ENCODE measurements at regions of chr1 and their contacts with region 1.

Region 1: DNA sequence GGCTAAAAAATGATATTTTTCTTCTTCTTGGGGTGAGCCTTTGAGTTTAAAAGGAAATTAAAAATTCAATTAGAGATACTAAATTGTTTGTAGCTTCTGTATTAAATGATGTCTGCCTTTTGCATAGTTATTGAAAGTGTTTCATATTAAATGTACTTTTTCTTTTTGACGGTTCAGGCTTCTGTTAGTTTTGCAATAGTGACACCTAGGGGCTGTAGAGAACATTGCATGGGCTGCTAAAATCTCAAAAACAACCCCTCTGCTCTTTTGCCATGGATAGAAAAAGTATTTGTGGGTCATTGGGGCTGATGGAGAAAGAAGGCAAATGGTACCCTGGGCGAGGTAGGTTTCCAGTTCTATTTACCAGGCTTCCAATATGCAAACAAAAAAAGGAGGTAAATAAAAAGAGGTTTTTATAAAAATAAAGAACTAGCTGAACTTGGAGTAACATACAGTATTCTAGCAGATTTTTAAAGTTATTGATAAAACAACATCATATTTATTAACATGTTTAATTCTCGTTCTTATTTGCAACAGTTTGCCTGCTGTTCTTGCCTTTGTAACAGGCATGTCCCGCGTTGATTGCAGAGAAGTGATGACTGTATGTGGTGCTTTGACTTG is 115.4 kb upstream of the HOOK1 start:
- DNase-seq: no peak
- H3K4me3 ChIP-seq: no peak overlapping the region
- H3K27ac ChIP-seq: no peak overlapping the region
- H3K4me1 ChIP-seq: peaks cover 0 to 9% (median 2%) of the 10 kb centered on the region in 4 experiments; a peak in 5 of 7 replicates
- H3K27me3 ChIP-seq: no peaks in the 10 kb centered on the region
- CTCF ChIP-seq: peak in 2 of 3 experiments; percentile 60 to 80; a peak in 3 of 4 replicates
- EP300 ChIP-seq: no peak
- POLR2A ChIP-seq: no peak
- RAD21 ChIP-seq: peak; percentile 94

Region 2: GRCh38 chr1:58739856-58740466 is 959.4 kb before region 1 on chr1:
- CTCF ChIA-PET with region 1: interaction called, 14 read pairs
- POLR2A ChIA-PET with region 1: no interaction called
- DNase-seq: no peak
- H3K4me3 ChIP-seq: no peak overlapping the region
- H3K27ac ChIP-seq: no peak overlapping the region
- H3K4me1 ChIP-seq: no peaks in the 10 kb centered on the region
- H3K27me3 ChIP-seq: no peaks in the 10 kb centered on the region
- CTCF ChIP-seq: peak in 2 of 3 experiments; percentile 43 to 57; a peak in 2 of 4 replicates
- EP300 ChIP-seq: no peak
- POLR2A ChIP-seq: no peak
- RAD21 ChIP-seq: peak; percentile 88 to 89

Region 3: DNA sequence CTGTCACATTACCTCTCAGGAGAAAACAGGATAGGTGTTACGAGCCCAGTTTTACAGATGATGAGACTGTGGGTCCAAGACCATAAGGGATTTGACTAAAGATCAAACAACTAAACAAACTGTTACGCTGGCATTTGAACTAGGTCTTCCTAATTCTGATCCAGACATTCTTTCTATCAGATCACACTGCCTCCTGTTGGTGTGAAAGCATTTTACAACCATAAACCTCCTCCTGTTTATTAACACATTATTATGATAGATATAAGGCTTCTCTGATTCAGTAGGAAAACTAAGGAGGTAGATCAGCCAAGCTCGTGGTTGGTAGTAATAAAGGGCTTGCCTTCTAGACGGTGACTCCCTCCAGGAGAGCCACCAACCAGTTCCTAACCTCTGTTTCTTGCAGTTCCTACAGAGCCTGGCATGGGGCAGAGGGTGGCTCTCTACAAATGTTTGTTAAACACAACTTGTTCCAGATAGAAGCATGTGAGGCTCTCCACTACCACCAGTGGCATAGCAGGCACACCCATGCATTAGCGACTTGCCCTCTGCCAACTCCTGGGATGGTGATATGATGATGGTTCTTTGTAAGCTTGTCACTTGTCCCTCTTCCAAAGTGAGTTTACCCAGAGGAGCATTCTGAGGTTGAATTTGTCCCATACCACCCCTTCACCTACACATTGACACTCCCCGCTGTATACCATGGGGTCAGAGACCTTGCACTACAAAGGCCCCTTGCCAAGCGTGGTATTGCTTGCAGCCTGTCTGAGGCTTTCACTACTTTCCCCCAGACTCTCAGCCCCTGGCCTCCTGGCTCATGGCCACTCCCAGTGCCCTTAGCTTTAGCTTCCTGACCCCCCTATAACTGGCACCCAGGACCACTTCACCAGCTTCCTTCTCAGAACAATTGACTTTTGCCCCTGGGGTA is 19.0 kb after region 1 on chr1:
- CTCF ChIA-PET with region 1: interaction called, 21 read pairs
- POLR2A ChIA-PET with region 1: no interaction called
- DNase-seq: no peak
- H3K4me3 ChIP-seq: no peak overlapping the region
- H3K27ac ChIP-seq: no peak overlapping the region
- H3K4me1 ChIP-seq: peaks cover 0 to 6% (median 0%) of the 10 kb centered on the region in 4 experiments; a peak in 1 of 7 replicates
- H3K27me3 ChIP-seq: no peaks in the 10 kb centered on the region
- CTCF ChIP-seq: peak in 2 of 3 experiments; percentile 29 to 60; a peak in 2 of 4 replicates
- EP300 ChIP-seq: no peak
- POLR2A ChIP-seq: no peak
- RAD21 ChIP-seq: peak; percentile 61 to 66

Region 4: DNA sequence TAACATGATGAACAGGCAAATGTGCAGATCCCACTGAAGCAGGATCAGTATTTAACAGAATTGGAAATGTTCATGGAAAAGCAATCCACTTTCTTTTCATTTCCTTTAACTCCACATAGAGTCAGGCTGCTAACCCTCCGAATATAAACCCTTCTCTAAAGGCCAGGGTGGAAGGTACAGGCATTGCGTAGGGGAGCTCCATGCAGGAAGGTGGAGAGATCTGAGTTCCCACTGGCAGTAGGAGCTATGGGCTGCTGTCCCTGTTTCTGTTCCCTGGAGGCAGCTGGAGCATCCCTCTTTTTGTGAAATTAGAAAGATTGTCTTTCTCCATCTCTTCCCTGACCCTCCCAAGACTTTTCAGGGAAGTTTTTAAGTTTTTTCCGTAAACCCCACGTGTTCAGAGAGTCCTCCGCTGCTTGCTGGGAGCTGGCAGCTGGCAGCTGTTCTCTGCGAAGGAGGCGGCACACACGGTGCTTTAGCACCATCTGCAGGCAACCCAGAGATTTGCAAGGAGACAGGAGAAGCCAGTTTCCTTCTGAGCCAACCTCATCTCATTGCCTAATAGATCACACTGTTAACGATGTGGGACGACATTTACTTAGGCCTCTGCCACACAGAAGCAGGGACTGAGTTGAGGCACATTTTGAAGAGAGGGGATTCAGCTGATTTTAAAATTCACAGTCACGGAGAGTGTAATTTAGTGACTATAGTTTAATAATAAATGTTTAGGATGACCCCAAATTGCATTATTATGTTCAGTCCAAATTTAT is 60.0 kb after region 1 on chr1:
- CTCF ChIA-PET with region 1: interaction called, 11 read pairs
- POLR2A ChIA-PET with region 1: no interaction called
- DNase-seq: peak; percentile 54 to 84
- H3K4me3 ChIP-seq: no peak overlapping the region
- H3K27ac ChIP-seq: no peak overlapping the region
- H3K4me1 ChIP-seq: no peaks in the 10 kb centered on the region; a peak in 1 of 7 replicates
- H3K27me3 ChIP-seq: peaks cover 0 to 1% (median 0%) of the 10 kb centered on the region in 4 experiments; a peak in 1 of 7 replicates
- CTCF ChIP-seq: peak; percentile 75 to 96 (median 84)
- EP300 ChIP-seq: 0 out of 3 replicates have a peak, but pooled peaks of 1 of the 2 experiments have one; percentile 18
- POLR2A ChIP-seq: no peak
- RAD21 ChIP-seq: peak; percentile 99